Naive thymus-derived CD8-positive, alpha-beta T cell (primary cell): ENCODE measurements at regions of chr5 and their contacts with region 1.

Region 1: DNA sequence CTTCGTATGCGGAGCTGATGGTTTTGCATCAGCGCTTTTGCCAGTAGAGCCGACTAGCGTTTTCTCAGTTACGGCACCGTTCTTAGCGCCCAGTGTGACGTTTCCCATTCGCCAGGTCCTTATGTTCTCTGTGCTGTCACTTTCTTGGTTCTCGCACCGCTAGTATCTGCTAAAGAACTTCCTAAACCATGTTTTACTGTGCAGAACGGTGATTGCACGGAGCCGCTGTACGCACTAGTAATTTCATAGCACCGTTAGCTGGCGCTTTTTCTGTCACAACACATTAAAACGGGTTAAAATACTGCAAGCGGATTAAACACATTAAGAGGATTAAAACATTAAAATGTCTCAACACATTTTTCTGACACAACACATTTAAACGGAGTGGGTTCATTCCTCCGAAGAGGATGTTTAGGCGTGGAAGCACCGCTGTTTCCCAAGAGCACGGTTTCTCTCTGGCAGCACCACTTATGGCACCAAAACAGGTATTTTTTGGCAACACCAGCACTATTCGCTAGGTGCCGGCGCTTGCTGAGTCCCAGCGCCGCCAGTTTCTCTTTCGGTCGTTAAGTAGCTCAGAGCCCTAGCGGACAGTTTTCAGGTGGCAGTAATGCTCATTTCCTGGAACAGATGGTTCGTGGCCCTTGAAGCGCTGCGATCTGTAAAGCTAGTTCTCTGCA is 20.4 kb downstream of the ANXA2R start:
- DNase-seq: peak; percentile 68 to 94 (median 86)
- ATAC-seq: peak; percentile 65 to 67
- H3K4me3 Mint-ChIP-seq: peak overlapping the region; percentile 94 to 99 (median 98)
- H3K27ac Mint-ChIP-seq: peak overlapping the region; percentile 97 to 100 (median 100)
- H3K4me1 Mint-ChIP-seq: peaks cover 19 to 44% (median 40%) of the 10 kb centered on the region in 4 donors
- H3K27me3 Mint-ChIP-seq: no peaks in the 10 kb centered on the region

Region 2: GRCh38 chr5:42908509-42909488 is 111.0 kb before region 1 on chr5:
- POLR2A ChIA-PET with region 1: interaction called, 94 read pairs
- DNase-seq: peak; percentile 78 to 96 (median 90)
- ATAC-seq: peak; percentile 92 to 93
- H3K4me3 Mint-ChIP-seq: peak overlapping the region; percentile 82 to 98 (median 94)
- H3K27ac Mint-ChIP-seq: peak overlapping the region; percentile 89 to 98 (median 97)
- H3K4me1 Mint-ChIP-seq: peaks cover 2 to 22% (median 18%) of the 10 kb centered on the region in 4 donors
- H3K27me3 Mint-ChIP-seq: peaks cover 0 to 3% (median 0%) of the 10 kb centered on the region in 5 donors

Region 3: GRCh38 chr5:42940853-42941252 is 78.9 kb before region 1 on chr5:
- POLR2A ChIA-PET with region 1: no interaction called
- DNase-seq: no peak
- ATAC-seq: no peak
- H3K4me3 Mint-ChIP-seq: no peak overlapping the region
- H3K27ac Mint-ChIP-seq: no peak overlapping the region
- H3K4me1 Mint-ChIP-seq: peaks cover 0 to 4% (median 0%) of the 10 kb centered on the region in 4 donors
- H3K27me3 Mint-ChIP-seq: peaks cover 0 to 8% (median 0%) of the 10 kb centered on the region in 5 donors

Region 4: DNA sequence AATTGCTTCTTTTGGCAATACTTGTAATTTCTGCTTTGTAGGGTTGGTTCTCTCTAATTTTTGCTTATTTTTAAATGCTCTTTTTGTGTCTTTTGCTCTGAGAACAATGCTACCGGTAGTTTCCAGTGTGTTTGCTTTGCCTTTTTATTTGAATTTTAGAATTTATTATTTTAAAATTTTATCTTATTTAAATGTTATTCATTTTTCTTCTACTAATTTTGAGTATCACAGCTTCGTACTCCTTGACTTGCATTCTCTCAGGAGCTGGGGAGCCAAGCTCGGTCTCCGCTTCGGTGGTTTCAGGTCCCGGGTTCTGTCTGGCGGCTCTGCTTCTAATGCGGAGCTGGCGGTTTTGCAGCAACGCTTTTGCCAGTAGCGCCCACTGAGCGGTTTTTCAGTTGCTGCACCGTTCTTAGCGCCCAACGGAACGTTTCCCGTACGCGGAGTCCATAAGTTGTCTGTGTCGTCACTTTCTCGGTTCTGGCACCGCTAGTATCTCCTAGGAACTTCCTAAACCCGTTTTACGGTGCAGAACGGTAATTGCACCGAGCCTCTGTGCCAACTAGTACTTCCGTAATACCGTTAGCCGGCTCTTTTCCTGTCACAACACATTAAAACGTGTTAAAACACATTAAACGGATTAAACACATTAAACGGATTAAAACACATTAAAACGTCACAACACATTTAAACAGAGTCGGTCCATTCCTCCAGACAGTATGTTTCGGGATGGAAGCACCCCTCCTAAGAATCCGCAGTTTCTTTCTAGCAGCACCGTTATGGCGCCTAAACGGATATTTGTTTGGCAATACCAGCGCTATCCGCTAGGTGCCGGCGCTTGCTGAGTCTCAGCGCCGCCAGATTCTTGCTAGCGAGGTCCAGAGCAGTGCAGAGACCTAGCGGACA is 25.3 kb before region 1 on chr5:
- POLR2A ChIA-PET with region 1: interaction called, 775 read pairs
- DNase-seq: peak; percentile 71 to 93 (median 87)
- ATAC-seq: peak; percentile 56 to 63
- H3K4me3 Mint-ChIP-seq: peak overlapping the region; percentile 87 to 100 (median 100)
- H3K27ac Mint-ChIP-seq: peak overlapping the region; percentile 97 to 100 (median 100)
- H3K4me1 Mint-ChIP-seq: peaks cover 12 to 38% (median 31%) of the 10 kb centered on the region in 4 donors
- H3K27me3 Mint-ChIP-seq: no peaks in the 10 kb centered on the region

Region 5: GRCh38 chr5:43008369-43009153 is 11.2 kb before region 1 on chr5:
- POLR2A ChIA-PET with region 1: interaction called, 563 read pairs
- DNase-seq: peak; percentile 80 to 96 (median 91)
- ATAC-seq: peak; percentile 63 to 71
- H3K4me3 Mint-ChIP-seq: peak overlapping the region; percentile 83 to 99 (median 94)
- H3K27ac Mint-ChIP-seq: peak overlapping the region; percentile 92 to 100 (median 99)
- H3K4me1 Mint-ChIP-seq: peaks cover 17 to 40% (median 28%) of the 10 kb centered on the region in 4 donors
- H3K27me3 Mint-ChIP-seq: no peaks in the 10 kb centered on the region

Region 6: DNA sequence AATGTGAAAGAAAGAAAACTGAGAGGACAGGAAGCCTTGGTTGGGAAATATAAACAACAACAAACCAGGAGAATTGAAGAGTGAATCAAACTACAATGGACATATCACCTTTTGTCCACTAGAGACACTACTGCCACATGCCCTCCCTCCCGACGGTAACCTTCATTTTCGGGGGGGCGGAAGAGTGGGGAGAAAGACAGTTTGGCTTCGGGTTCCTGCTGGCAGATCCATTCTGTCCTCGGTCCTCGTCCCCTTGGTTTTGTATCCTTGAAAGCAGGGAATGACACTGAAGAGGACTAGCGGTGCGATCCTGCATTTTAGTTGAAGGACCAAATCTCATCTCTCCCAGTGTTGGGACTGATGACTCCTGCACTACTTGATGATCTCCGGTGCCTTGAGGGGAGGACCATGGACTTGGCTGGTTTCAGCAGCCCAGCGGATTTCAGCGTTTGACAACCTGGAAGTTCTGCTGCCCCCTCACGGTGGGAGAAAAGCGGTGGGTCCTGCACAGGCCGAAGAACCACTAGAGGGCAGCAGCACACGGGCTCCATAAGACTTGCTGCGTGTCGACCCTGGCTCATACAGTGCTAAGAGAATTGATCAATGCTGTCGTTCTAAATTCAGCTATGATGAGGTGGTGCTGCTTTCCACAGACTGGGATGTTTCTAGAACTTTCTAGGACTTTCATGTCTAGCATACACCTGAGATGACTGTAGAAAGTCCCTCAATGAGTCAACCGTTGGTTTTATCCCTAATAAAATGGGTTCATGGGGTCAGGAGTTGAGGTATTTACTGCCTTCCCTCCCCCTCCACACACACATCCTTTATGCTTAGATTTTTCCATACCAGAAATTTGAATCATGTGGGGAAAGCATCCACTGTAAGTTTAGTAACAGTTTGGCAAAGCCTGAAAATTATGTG is 85.9 kb after region 1 on chr5:
- POLR2A ChIA-PET with region 1: interaction called, 16 read pairs
- DNase-seq: peak; percentile 78 to 94 (median 87)
- ATAC-seq: peak; percentile 95 to 97
- H3K4me3 Mint-ChIP-seq: peak overlapping the region; percentile 77 to 91 (median 87)
- H3K27ac Mint-ChIP-seq: peak overlapping the region; percentile 72 to 93 (median 82)
- H3K4me1 Mint-ChIP-seq: peaks cover 14 to 39% (median 35%) of the 10 kb centered on the region in 4 donors
- H3K27me3 Mint-ChIP-seq: no peaks in the 10 kb centered on the region